ENCODE measurements at regions of chr2 and their contacts with region 1.

Region 1: DNA sequence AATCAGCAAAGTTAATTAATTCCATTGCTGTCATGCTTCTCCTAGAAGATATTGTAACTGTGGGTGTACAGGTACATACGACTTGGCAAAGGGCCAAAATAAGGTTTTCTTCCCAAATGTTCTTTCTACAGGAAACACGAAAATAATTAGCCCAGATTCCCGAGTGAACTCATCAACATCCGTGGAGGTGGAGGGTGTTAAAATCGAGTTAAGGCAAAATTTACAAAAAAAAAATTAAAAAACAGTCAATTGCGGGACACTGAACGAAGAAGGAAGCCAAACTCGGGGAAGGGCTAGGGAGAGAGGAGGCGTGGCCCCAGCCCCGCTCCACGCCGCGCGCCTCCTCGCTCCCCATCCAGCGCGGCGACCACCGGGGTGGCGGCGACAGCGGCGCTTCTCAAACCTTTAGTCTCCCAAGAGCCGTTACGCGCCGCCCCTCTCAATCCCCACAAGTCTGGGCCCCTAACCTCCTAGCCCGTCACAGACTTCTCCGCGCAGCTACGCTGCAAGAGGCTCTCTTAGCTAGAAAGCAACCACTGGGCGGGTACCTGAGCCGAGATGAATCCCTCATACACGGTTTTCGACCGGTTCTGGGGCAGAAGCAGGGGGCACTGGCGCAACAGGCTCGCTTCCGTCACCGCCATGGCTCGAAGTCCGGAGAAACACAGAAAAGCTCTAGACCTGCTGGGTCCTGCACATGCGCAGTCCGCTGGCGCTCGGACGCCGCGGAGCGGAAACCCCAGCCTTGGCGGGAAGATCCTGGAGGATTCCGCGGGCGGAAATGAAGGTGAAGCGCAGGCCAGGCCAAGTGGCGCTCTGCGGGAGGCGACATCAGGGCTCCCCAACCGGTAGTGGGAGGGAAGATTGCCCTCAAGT is at the start of gene FANCL:
- DNase-seq: peak; percentile 90
- ATAC-seq: peak; percentile 86
- H3K4me3 ChIP-seq: peak within 1 kb of the TSS; percentile 78
- H3K27ac ChIP-seq: peak within 1 kb of the TSS; percentile 63
- H3K4me1 ChIP-seq: peaks cover 17% of the 10 kb centered on the region; the same call in 1 of the 2 replicates
- H3K27me3 ChIP-seq: no peaks in the 10 kb centered on the region
- CTCF ChIP-seq: no peak
- total RNA-seq, gene FANCL: 18.0 and 18.3 TPM in 2 replicates

Region 2: DNA sequence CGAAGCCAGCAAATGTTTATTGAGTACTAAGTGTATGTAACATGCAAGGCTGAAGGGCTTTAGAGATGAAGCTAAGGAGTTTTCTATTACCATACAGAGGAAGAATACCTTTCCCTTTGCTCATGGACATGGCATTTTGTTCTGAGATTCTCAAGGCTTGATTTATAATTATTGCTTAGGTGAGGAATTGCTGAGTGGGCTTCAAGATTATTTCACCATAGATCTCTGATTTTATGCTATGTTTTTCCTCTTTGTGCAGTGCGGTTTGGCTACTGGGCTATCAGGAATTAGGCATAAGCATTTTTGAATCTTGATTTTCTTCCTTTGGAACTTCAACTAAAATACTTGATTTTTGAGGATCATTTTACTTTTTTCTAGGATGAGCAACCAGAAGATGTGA is 151.8 kb before region 1 on chr2:
- CTCF ChIA-PET with region 1: no interaction called
- POLR2A ChIA-PET with region 1: no interaction called
- intact Hi-C with region 1: loop called (anchors 1 kb)
- DNase-seq: no peak
- ATAC-seq: no peak
- H3K4me3 ChIP-seq: no peak overlapping the region
- H3K27ac ChIP-seq: no peak overlapping the region
- H3K4me1 ChIP-seq: no peaks in the 10 kb centered on the region
- H3K27me3 ChIP-seq: no peaks in the 10 kb centered on the region
- CTCF ChIP-seq: no peak

Region 3: GRCh38 chr2:58289029-58289428 is 48.1 kb after region 1 on chr2:
- CTCF ChIA-PET with region 1: no interaction called
- POLR2A ChIA-PET with region 1: no interaction called
- intact Hi-C with region 1: loop called (anchors 1 kb)
- DNase-seq: peak; percentile 81
- ATAC-seq: peak; percentile 98
- H3K4me3 ChIP-seq: 0 out of 2 replicates have a peak overlapping the region, but pooled peaks have one; percentile 19
- H3K27ac ChIP-seq: peak overlapping the region; percentile 42
- H3K4me1 ChIP-seq: peaks cover 9% of the 10 kb centered on the region
- H3K27me3 ChIP-seq: no peaks in the 10 kb centered on the region
- CTCF ChIP-seq: no peak

Measured in PC-3 (cell line).